ENCODE measurements at regions of chr11 and their contacts with region 1.

Region 1: GRCh38 chr11:1889224-1890120 is 2.2 kb downstream of the PRR33 start:
- DNase-seq: peak in 1 of 2 donors; percentile 42
- ATAC-seq: peak; percentile 15

Region 2: DNA sequence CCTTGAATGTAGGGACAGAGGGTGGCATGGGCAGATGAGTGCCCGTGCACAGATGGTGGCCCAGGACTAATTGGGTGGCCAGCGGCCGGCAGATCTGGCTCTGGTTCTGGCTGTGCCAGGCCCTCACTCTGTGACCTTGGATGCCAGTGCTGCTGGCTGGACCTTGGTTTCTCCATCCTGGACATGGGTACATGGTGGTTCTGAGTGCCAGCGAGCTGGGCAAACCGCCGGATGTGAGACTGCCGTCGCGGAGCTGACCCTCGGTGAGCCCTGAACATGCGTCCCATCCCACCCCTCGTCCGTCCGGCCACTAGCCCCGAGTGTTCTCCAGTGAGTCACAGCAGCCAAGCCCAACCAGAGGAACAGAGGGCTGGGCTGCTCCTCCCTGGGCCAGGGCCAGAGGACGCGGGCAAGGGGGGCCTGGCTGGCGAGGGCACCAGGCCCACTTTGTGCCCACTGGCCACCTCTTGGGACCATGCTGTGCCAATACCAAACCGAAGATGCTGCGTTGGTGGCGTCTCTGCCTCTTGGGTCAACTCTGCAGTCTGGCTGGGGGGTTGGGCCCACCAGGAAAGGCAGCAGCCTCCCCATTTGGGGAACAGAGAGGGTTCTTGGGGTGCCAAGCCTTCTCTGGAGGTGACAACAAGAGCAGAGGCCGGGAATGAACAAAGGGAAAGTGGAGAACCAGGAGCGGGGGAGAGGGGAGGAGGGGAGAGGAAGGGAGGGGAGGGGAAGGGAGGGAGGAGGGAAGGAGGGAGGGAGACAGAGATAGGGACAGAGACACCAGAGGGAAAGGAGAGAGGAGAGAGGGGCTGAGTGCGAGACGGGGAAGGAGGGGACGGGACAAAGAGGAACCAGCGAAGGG is 25.9 kb before region 1 on chr11:
- intact Hi-C with region 1: no loop called
- DNase-seq: peak in 1 of 2 donors; percentile 74
- ATAC-seq: peak; percentile 61

Region 3: DNA sequence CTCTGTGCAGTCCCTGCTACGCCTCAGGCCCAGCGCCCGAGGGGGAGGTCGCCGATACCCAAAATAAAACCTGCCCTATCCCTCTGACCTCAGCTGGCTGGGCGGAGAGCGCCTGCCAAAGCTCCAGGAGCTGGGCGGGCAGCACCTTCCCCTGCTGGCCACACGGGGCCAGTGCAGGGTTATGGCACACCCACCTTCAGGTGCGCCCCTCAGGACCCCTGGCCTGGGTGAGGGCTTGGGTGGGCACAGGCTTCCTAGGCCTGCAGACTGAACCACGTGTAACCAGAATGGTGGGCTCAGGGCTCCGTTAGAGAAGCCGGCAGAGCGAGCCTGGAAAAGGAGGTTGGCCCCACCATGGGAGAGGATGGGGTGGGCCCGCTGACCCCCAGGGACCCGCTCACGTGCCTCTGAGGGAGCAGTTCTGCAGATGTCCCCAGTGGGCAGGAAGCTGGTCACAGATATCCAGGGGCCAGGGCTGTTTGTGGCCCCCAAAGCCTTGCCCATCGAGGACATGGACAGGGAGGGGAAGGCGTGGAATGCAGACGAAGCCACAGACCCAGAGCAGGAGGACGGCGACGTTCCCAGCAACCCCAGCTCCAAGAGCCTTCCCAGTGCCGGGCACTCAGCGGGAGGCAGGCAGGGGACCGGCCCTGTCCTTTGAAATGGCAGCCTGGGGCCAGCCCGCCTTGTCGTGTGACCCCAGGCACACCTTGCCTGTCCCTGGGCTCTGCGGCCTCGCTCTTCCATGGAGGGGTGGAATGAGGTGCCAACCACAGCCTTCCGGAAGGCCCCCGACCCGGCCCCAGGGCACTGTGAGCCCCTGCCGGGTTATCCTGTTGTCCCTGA is 28.4 kb after region 1 on chr11:
- intact Hi-C with region 1: loop called (anchors 1 to 2 kb)
- DNase-seq: peak in 1 of 2 donors; percentile 24
- ATAC-seq: peak; percentile 49

Region 4: DNA sequence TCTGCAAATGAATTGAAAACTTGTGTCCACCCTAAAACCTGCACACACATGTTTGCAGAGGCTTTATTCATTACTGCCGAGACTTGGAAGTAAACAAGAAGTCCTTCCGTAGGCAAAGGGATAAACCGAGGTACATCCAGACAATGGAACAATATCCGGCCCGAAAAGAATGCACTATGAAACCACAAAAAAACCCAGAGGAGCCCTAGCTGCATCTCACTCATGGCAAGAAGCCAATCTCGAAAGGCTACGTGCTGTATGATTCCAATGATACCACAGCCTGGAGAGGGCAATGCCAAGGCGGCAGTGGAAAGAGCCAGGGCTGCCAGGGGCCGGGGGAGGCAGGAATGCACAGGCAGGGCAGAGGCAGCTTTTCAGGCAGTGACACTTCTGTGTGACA is 54.5 kb after region 1 on chr11:
- intact Hi-C with region 1: loop called (anchors 1 to 10 kb)
- DNase-seq: peak in 1 of 2 donors; percentile 2
- ATAC-seq: no peak